ENCODE measurements at regions of chr20 and their contacts with region 1.

Region 1: GRCh38 chr20:35303735-35304491 is 11.7 kb upstream of the FAM83C start:
- DNase-seq: peak; percentile 92
- ATAC-seq: peak; percentile 79
- H3K4me3 Mint-ChIP-seq: no peak overlapping the region
- H3K27ac Mint-ChIP-seq: peak overlapping the region; percentile 60
- H3K4me1 Mint-ChIP-seq: peaks cover 44% of the 10 kb centered on the region
- H3K27me3 Mint-ChIP-seq: no peaks in the 10 kb centered on the region

Region 2: DNA sequence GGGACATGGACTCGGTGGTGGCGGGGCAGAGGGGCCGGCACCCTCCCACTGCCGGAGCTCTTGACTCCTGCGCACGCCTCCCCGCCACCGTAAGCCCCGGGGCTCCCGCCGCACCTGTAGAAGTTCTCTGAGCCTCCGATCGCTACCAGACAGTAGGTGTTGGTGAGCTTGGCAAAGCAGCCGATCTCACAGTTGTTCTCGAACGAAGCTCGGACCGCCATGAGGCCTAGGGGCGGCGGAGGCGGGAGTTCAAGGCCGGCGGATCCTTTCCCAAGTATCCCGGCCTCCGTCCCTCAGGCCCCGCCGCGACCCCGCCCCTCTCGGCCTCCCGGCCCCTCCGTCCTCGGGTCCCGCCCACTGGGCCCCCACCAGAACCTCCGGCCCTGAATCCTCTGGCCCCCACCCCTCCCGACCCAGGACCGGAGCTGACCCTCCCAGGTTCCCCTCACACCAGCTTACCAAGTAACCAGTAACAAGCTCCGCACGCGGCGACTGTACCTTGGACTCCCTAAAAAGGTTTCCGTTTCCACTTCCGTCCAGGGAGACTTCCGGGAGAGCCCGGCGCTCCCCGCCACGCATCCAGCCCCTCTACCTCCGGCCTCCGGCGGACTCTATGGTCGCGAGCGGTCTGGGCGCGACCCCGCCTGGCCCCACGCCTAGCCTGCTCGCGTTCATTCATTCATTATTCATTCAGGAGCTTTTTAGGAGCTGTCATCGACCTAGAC is 19.5 kb before region 1 on chr20 and contains the start of gene EIF6:
- CTCF ChIA-PET with region 1: interaction called, 11 read pairs
- POLR2A ChIA-PET with region 1: interaction called, 7 read pairs
- DNase-seq: peak; percentile 84
- ATAC-seq: peak; percentile 87
- H3K4me3 Mint-ChIP-seq: peak within 1 kb of the TSS; percentile 85
- H3K27ac Mint-ChIP-seq: peak within 1 kb of the TSS; percentile 89
- H3K4me1 Mint-ChIP-seq: peaks cover 34% of the 10 kb centered on the region
- H3K27me3 Mint-ChIP-seq: no peaks in the 10 kb centered on the region
- total RNA-seq, gene EIF6: 104 to 109 TPM

Region 3: GRCh38 chr20:35318502-35319157 is 14.7 kb after region 1 on chr20:
- CTCF ChIA-PET with region 1: interaction called, 84 read pairs
- POLR2A ChIA-PET with region 1: no interaction called
- DNase-seq: no peak
- ATAC-seq: no peak
- H3K4me3 Mint-ChIP-seq: no peak overlapping the region
- H3K27ac Mint-ChIP-seq: peak overlapping the region; percentile 41
- H3K4me1 Mint-ChIP-seq: peaks cover 35% of the 10 kb centered on the region
- H3K27me3 Mint-ChIP-seq: no peaks in the 10 kb centered on the region

Region 4: DNA sequence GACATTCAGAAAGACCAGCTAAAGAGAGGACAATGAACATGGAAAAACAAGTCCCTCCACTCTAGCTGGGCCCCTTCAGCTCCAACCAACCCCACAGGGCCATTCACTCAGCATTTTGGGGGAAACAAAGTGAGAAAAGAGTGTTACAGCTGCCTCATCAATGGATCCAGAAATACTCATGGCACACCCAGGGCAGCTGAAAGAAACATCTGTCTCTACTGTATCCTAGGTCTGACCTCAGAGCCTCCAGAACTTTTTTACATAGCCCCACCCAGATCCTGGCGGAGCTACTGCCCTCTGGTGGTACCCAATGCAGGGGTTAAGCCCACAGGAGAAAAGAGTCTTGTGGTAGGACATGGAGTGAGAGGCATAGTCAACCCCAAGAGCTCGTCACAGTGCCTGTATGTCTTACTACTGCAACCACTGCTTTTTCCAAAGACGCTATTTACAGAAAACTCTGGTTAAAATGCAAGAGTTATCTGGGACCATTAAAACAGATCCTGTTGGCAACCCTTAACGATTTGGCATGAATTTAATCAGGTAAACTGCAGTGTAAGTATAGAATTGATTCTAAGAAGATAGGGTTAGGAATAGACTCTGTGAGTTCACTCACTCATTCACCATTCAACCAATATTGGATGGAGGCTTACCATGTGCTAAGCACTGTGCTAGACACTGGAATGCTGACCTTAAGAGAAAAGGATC is 25.7 kb after region 1 on chr20:
- CTCF ChIA-PET with region 1: interaction called, 84 read pairs
- POLR2A ChIA-PET with region 1: interaction called, 4 read pairs
- DNase-seq: peak; percentile 60
- ATAC-seq: peak; percentile 90
- H3K4me3 Mint-ChIP-seq: no peak overlapping the region
- H3K27ac Mint-ChIP-seq: no peak overlapping the region
- H3K4me1 Mint-ChIP-seq: peaks cover 3% of the 10 kb centered on the region
- H3K27me3 Mint-ChIP-seq: no peaks in the 10 kb centered on the region

Region 5: GRCh38 chr20:35447082-35447789 is 143.3 kb after region 1 on chr20:
- CTCF ChIA-PET with region 1: interaction called, 94 read pairs
- POLR2A ChIA-PET with region 1: interaction called, 3 read pairs
- DNase-seq: peak; percentile 94
- ATAC-seq: peak; percentile 97
- H3K4me3 Mint-ChIP-seq: peak overlapping the region; percentile 84
- H3K27ac Mint-ChIP-seq: peak overlapping the region; percentile 76
- H3K4me1 Mint-ChIP-seq: peaks cover 7% of the 10 kb centered on the region
- H3K27me3 Mint-ChIP-seq: peaks cover 4% of the 10 kb centered on the region

Region 6: GRCh38 chr20:35454881-35455609 is 151.1 kb after region 1 on chr20 and contains the start of gene CEP250:
- CTCF ChIA-PET with region 1: interaction called, 89 read pairs
- POLR2A ChIA-PET with region 1: interaction called, 3 read pairs
- DNase-seq: peak; percentile 96
- ATAC-seq: peak; percentile 98
- H3K4me3 Mint-ChIP-seq: peak within 1 kb of the TSS; percentile 89
- H3K27ac Mint-ChIP-seq: peak within 1 kb of the TSS; percentile 98
- H3K4me1 Mint-ChIP-seq: peaks cover 33% of the 10 kb centered on the region
- H3K27me3 Mint-ChIP-seq: no peaks in the 10 kb centered on the region
- total RNA-seq, gene CEP250: 72.1 to 74.5 TPM